MCF 10A (cell line): ENCODE measurements at regions of chr7 and their contacts with region 1.

Region 1: GRCh38 chr7:101792051-101792681 is 25.3 kb upstream of the CUX1 start:
- DNase-seq: peak; percentile 92
- H3K4me3 Mint-ChIP-seq: peak overlapping the region; percentile 33
- H3K27ac Mint-ChIP-seq: peak overlapping the region; percentile 97
- H3K4me1 Mint-ChIP-seq: no peaks in the 10 kb centered on the region
- H3K27me3 Mint-ChIP-seq: no peaks in the 10 kb centered on the region
- CTCF ChIP-seq: no peak

Region 2: DNA sequence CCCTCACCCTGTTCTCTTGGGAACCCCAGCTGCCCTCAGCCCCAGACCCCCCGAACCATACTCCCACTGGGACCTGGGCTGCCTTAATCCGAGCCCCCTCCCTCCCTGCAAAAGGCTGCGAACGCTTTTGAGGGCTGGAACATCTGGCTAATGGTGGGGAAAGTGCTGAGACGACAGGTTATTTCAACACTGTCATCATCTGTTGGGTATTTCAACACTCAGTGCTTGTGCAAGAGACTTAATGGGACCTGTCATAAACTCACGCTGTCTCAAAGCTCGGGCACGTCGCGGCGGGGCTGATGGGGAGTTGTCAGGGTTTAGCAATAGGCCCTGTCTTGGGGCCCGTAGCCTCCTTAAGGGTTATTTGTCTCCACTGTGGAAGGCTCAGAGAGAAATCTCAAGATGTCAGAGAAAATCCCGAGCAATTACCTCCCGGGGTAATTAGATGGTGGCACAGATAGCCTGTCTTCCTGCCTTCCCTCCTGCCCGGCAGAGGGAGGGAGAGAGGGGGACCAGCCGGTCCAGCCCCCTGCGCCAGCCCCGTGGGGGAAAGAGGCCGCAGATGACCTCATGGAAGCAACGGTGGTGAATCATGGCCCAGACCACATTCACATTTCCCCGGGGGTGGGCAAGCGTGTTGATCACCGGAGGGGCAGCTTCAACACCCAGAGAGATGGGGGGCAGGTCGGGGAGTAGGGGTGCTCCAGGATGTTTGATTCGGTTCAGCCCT is 74.4 kb before region 1 on chr7:
- CTCF ChIA-PET with region 1: interaction called, 3 read pairs
- POLR2A ChIA-PET with region 1: interaction called, 5 read pairs
- intact Hi-C with region 1: loop called (anchors 1 kb)
- DNase-seq: peak; percentile 96
- H3K4me3 Mint-ChIP-seq: peak overlapping the region; percentile 40
- H3K27ac Mint-ChIP-seq: peak overlapping the region; percentile 4
- H3K4me1 Mint-ChIP-seq: peaks cover 6% of the 10 kb centered on the region
- H3K27me3 Mint-ChIP-seq: peaks cover 3% of the 10 kb centered on the region
- CTCF ChIP-seq: no peak

Region 3: GRCh38 chr7:101754424-101755159 is 37.6 kb before region 1 on chr7:
- CTCF ChIA-PET with region 1: no interaction called
- POLR2A ChIA-PET with region 1: interaction called, 5 read pairs
- intact Hi-C with region 1: loop called (anchors 2 kb)
- DNase-seq: peak; percentile 59
- H3K4me3 Mint-ChIP-seq: peak overlapping the region; percentile 78
- H3K27ac Mint-ChIP-seq: peak overlapping the region; percentile 86
- H3K4me1 Mint-ChIP-seq: peaks cover 5% of the 10 kb centered on the region
- H3K27me3 Mint-ChIP-seq: no peaks in the 10 kb centered on the region
- CTCF ChIP-seq: no peak

Region 4: DNA sequence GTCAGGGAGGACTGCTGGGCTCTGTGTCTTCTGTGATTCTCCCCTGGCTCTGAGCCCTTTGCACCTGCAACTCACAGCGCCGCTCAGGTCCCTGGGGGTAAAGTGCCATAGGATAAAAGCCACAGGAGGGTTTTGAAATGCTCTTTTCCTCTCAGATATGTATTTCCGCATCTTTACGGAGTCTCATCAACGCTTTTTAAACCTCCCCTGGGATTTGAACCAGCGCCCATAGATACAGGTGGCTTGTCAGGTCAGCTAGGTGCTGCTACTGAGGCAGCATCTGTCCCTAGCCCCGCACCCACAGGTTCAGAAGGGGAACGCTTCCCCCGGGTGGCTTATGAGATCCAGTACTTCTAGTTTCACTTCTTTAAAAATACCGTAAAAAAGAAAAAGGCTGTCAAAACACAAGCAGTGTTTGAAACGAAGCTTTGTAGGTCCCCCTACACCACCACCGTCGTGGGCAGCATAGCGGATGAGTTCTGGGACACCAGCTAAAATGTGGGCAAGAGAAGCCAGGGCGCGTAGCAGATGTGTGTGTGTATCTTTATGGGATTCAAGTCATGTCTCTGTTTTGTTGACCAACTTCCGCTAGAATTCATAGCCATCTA is 198.7 kb after region 1 on chr7:
- CTCF ChIA-PET with region 1: no interaction called
- POLR2A ChIA-PET with region 1: no interaction called
- intact Hi-C with region 1: no loop called
- DNase-seq: no peak
- H3K4me3 Mint-ChIP-seq: no peak overlapping the region
- H3K27ac Mint-ChIP-seq: no peak overlapping the region
- H3K4me1 Mint-ChIP-seq: no peaks in the 10 kb centered on the region
- H3K27me3 Mint-ChIP-seq: no peaks in the 10 kb centered on the region
- CTCF ChIP-seq: no peak